HEK293 (cell line): ENCODE measurements at regions of chr17 and their contacts with region 1.

Region 1: DNA sequence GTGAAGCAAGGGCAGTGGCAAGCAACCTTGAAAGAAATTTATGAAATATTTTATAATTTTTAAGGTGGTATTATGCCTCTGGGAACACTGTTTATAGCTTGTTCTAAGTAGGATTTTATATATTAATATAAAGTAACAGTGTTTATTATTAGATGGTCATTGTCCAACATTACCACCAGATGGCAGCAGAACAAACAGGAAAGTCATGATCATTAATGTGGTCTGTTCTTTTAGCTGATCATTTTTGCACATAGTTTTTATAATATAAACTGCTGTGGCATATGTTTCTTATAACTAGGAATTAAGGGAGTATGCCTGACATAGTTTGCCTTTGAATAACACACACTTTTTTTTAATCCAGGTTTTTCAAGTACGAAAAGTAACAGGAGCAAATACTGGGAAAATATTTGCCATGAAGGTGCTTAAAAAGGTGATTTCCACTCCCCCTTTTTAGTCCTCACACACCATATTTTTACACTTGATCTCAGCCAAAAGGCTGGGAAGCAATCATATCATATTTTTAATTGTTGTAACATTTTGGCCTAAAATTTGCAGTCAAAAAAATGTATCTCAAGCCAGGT is 21.4 kb downstream of the RPS6KB1 start:
- H3K4me3 ChIP-seq: no peak overlapping the region
- H3K27ac ChIP-seq: no peak overlapping the region
- H3K4me1 ChIP-seq: peaks cover 8% of the 10 kb centered on the region; the same call in 1 of the 2 replicates
- CTCF ChIP-seq: no peak

Region 2: DNA sequence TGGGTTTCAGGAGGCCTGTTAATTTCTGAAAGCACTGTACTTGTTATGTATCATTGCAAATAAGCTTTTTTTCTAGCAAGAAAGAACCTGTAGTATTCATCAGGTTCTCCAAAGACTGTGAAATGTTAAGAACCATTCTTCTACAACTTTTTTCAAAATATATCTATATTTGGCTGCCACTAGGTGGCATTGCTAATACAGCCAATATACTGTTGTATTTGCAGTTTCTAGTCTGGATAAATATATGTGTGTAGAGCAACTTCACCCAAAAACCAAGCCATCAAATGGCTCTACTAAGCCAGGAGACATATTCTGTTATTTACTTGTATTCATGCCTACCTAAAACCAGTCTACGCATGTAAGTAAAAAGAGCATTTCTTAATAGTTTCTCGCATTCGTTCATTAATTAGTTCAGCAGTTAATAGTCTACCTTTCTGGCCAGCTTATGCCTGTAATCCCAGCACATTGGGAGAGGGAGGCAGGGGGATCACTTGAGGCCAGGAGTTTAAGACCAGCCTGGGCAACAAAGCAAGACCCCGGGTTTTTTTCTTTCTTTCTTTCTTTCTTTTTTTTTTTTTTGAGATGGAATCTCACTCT is 167.4 kb before region 1 on chr17:
- CTCF ChIA-PET with region 1: interaction called, 26 read pairs
- POLR2A ChIA-PET with region 1: no interaction called
- H3K4me3 ChIP-seq: no peak overlapping the region
- H3K27ac ChIP-seq: no peak overlapping the region
- H3K4me1 ChIP-seq: no peaks in the 10 kb centered on the region
- CTCF ChIP-seq: no peak

Region 3: GRCh38 chr17:59804901-59805465 is 109.4 kb before region 1 on chr17:
- CTCF ChIA-PET with region 1: no interaction called
- POLR2A ChIA-PET with region 1: no interaction called
- H3K4me3 ChIP-seq: no peak overlapping the region
- H3K27ac ChIP-seq: peak overlapping the region; percentile 35; the same call in 1 of the 2 replicates
- H3K4me1 ChIP-seq: peaks cover 20% of the 10 kb centered on the region
- CTCF ChIP-seq: no peak

Region 4: DNA sequence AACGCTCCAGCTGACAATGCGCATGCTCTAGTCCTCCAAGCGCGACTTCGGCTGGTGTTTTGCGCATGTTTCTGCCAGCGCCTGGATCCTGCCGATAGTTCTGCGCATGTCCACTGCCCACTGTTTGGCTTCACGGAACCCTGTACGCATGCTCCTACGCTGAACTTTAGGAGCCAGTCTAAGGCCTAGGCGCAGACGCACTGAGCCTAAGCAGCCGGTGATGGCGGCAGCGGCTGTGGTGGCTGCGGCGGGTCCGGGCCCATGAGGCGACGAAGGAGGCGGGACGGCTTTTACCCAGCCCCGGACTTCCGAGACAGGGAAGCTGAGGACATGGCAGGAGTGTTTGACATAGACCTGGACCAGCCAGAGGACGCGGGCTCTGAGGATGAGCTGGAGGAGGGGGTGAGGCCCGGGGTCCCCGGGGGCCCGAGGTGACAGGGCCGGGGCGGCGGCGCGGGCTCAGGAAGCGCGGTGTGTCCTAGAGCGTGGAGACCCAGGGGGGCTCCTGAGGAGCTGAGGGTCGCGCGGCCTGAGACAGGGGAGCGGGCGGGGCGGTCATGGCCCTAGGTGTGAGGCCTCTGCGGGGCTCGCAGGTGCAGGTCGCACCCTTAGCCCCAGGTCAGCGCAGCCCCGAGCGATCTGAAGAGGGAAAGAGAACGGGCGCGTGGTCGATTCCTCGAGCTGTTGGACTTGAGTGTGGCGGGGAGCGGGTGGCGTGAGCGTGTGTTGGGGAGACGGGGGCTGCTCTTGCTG is 21.3 kb before region 1 on chr17 and contains the starts of genes RPS6KB1 and TUBD1:
- CTCF ChIA-PET with region 1: interaction called, 11 read pairs
- POLR2A ChIA-PET with region 1: interaction called, 3 read pairs
- H3K4me3 ChIP-seq: peak within 1 kb of the TSS; percentile 98
- H3K27ac ChIP-seq: peak within 1 kb of the TSS; percentile 98
- H3K4me1 ChIP-seq: peaks cover 16% of the 10 kb centered on the region
- CTCF ChIP-seq: no peak; the same call in 1 of the 2 replicates

Region 5: GRCh38 chr17:59941131-59941530 is 26.8 kb after region 1 on chr17:
- CTCF ChIA-PET with region 1: interaction called, 14 read pairs
- POLR2A ChIA-PET with region 1: no interaction called
- H3K4me3 ChIP-seq: no peak overlapping the region
- H3K27ac ChIP-seq: no peak overlapping the region
- H3K4me1 ChIP-seq: no peaks in the 10 kb centered on the region
- CTCF ChIP-seq: no peak

Region 6: DNA sequence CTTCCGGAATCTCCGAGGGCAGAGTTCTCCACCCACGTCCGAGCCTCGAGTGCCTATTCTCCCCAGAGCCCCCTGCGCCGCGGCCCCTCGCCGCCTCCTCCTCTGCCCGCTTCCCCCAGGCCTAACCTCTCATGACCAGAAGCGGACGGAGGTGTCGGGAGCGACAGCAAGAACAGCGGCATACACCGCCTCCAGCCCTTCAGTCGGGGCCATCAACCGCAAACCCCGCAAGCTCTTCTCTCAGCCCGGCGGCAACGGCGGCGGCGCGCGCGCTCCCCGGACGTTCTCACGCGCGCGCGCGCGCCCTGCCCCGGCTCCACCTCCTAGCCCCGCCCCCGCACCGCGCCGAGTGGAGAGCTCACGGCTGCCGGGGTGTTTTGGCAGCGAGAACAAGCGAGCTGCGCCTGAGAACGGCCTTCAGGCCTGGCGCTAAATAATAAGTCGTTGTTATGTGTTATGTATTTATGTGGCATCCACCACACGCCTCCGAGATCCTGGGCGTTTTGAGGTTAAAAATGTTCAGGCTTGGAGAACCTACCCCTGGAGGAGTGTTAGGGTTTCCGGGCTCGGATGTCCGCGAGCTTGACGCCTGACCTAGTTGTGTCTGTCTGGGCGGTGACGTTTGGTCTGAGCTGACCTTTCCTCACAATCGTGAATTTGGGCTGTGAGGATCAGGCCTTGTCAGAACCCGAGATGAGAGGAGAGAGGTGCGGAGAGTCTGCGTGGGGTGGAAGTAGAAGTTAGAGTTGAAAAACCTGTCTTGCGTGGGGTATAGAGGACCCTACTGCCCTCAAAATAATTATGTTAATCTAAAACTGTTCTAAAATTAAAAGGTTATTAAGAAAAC is 50.3 kb after region 1 on chr17 and contains the start of gene RNFT1:
- CTCF ChIA-PET with region 1: interaction called, 13 read pairs
- POLR2A ChIA-PET with region 1: no interaction called
- H3K4me3 ChIP-seq: peak within 1 kb of the TSS; percentile 70
- H3K27ac ChIP-seq: peak within 1 kb of the TSS; percentile 74
- H3K4me1 ChIP-seq: peaks cover 11% of the 10 kb centered on the region; the same call in 1 of the 2 replicates
- CTCF ChIP-seq: no peak